ENCODE measurements at regions of chr10 and their contacts with region 1.

Region 1: GRCh38 chr10:35412900-35413491 is 76.7 kb downstream of the CCNY start:
- DNase-seq: no peak
- ATAC-seq: peak; percentile 46
- H3K4me3 ChIP-seq: no peak overlapping the region
- H3K4me3 Mint-ChIP-seq: no peak overlapping the region
- H3K27ac ChIP-seq: no peak overlapping the region
- H3K27ac Mint-ChIP-seq: no peak overlapping the region
- H3K4me1 ChIP-seq: peaks cover 42% of the 10 kb centered on the region
- H3K4me1 Mint-ChIP-seq: peaks cover 41% of the 10 kb centered on the region
- H3K27me3 ChIP-seq: no peaks in the 10 kb centered on the region
- H3K27me3 Mint-ChIP-seq: no peaks in the 10 kb centered on the region
- CTCF ChIP-seq: no peak

Region 2: GRCh38 chr10:35426657-35427056 is 13.7 kb after region 1 on chr10:
- CTCF ChIA-PET with region 1: no interaction called
- POLR2A ChIA-PET with region 1: no interaction called
- intact Hi-C with region 1: loop called in 1 of 2 experiments (anchors 2 kb)
- DNase-seq: no peak
- ATAC-seq: no peak
- H3K4me3 ChIP-seq: no peak overlapping the region
- H3K4me3 Mint-ChIP-seq: no peak overlapping the region
- H3K27ac ChIP-seq: no peak overlapping the region
- H3K27ac Mint-ChIP-seq: peak overlapping the region; percentile 33
- H3K4me1 ChIP-seq: peaks cover 9% of the 10 kb centered on the region
- H3K4me1 Mint-ChIP-seq: peaks cover 71% of the 10 kb centered on the region
- H3K27me3 ChIP-seq: no peaks in the 10 kb centered on the region
- H3K27me3 Mint-ChIP-seq: no peaks in the 10 kb centered on the region
- CTCF ChIP-seq: no peak